ENCODE measurements at regions of chr9 and their contacts with region 1.

Region 1: DNA sequence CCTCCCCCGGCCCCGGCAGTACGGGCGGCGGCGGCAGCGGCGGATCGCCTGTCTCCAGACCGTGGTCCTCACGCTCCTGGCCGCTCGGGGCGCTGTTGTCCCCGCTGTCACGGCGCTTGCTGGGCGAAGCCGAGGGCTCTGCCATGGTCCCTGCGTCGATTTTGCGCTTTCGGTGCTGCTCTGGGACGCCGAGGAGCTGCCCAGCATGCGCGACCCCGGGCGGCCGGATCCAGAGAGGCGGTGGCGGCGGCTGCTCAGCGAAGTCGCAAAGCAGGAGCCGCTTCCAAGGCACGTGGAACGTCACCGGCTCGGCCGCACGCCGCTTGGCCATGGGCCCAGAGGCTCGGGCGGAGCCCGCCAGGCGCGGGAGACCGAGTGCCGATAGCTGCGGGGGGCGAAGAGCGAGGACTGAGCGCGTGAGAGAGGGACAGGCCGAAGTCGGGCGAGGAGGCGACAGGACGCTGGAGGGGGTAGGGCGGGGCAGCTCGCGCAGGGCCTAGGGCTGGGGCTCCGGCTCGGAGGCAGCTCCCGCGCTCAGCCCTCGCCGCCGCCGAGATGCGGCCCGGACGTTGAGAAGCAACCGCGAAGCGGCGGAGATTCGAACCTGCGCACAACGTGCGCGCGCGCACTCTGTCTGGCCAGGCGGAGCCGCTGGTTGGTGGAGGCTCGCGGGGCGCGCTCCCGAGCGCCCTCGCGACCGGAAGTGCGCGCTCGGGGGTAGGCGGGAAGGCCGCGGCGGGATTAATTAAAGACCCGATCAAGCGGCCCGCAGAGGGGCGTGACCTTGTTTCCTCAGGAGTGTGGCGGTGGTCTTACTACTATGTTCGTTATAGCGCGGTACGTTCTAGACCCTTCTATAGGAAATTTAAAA is at the start of gene C9orf40:
- DNase-seq: peak; percentile 93
- H3K4me3 Mint-ChIP-seq: peak within 1 kb of the TSS; percentile 92
- H3K27ac Mint-ChIP-seq: peak within 1 kb of the TSS; percentile 88
- H3K4me1 Mint-ChIP-seq: peaks cover 22% of the 10 kb centered on the region
- H3K27me3 Mint-ChIP-seq: no peaks in the 10 kb centered on the region
- total RNA-seq, gene C9orf40: 17.6 to 18.3 TPM

Region 2: DNA sequence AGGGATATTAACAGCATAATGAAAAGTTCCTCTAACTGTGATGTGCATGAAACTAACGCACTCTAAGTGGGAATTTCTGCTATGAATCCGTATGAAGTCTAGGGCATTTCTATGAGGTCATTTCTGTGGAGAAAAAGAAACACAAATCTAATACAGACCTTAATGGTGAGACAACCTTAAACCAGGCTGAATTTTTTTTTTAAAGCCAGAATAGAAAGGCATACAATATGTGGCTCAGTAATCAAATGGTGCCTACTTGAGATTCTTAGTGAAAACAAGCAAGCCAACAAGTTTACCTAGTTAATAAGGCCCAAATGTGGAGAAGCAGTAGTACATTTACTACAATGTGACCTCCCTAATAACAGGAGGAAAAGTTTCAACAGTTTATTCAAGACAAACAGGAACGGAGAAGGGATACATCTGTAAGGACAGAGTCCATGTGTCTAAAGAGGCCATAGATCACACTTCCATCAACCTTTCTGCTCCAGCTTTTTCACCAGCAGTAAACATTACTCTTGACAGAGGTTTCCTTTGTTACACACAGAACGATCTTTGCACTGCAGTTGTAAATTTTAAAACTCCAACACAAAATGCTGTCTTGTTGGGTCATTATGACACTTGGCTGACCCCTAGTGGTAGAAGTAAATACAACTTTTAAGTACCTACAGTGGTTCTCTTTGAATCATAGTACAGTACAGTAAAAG is 49.4 kb after region 1 on chr9:
- CTCF ChIA-PET with region 1: interaction called, 28 read pairs
- POLR2A ChIA-PET with region 1: no interaction called
- intact Hi-C with region 1: loop called (anchors 2 kb)
- DNase-seq: no peak
- H3K4me3 Mint-ChIP-seq: no peak overlapping the region
- H3K27ac Mint-ChIP-seq: no peak overlapping the region
- H3K4me1 Mint-ChIP-seq: peaks cover 5% of the 10 kb centered on the region
- H3K27me3 Mint-ChIP-seq: no peaks in the 10 kb centered on the region

Measured in activated CD4-positive, alpha-beta memory T cell treated with anti-CD3 and anti-CD28 coated beads for 36 hours (primary cell).